ENCODE measurements at regions of chr19 and their contacts with region 1.

Region 1: GRCh38 chr19:1507763-1508509 is 4.9 kb downstream of the ADAMTSL5 start:
- DNase-seq: peak; percentile 72
- ATAC-seq: peak; percentile 89
- H3K4me3 Mint-ChIP-seq: peak overlapping the region; percentile 80
- H3K27ac Mint-ChIP-seq: peak overlapping the region; percentile 80
- H3K4me1 Mint-ChIP-seq: peaks cover 14% of the 10 kb centered on the region
- H3K27me3 Mint-ChIP-seq: peaks cover 39% of the 10 kb centered on the region
- CTCF ChIP-seq: no peak

Region 2: DNA sequence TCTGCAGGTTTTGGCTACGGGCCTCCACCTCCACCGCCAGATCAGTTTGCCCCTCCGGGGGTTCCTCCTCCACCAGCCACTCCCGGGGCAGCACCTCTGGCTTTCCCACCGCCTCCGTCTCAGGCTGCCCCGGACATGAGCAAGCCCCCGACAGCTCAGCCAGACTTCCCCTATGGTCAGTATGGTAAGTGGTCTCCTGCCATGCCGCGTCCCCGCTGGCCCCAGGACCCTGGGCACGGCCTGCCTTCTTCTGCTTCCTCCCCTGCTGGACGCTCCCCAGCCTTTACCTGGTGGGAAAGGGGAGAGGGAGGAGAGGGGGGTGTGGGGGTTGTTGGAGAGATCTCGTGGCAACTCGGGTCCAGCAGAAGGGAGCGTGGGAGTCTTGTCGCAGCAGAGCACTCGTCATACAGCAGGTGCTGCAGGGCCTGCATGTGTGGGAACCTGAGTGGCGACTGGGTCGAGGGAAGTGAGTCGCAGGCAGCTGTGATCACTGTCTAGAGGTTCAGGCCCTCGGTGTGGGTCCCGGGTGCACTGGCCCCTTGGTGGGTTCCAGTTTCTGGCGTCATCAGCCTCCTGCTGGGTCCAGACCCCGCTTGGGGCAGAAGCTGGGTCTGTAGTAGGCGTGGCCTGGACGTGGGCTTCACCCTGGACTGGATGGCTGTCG is 75.3 kb before region 1 on chr19:
- CTCF ChIA-PET with region 1: no interaction called
- POLR2A ChIA-PET with region 1: no interaction called
- intact Hi-C with region 1: no loop called
- DNase-seq: no peak
- ATAC-seq: no peak
- H3K4me3 Mint-ChIP-seq: no peak overlapping the region
- H3K27ac Mint-ChIP-seq: no peak overlapping the region
- H3K4me1 Mint-ChIP-seq: peaks cover 1% of the 10 kb centered on the region
- H3K27me3 Mint-ChIP-seq: no peaks in the 10 kb centered on the region
- CTCF ChIP-seq: no peak

Region 3: GRCh38 chr19:1455336-1456120 is 52.4 kb before region 1 on chr19:
- CTCF ChIA-PET with region 1: no interaction called
- POLR2A ChIA-PET with region 1: no interaction called
- intact Hi-C with region 1: no loop called
- DNase-seq: no peak
- ATAC-seq: peak; percentile 73
- H3K4me3 Mint-ChIP-seq: peak overlapping the region; percentile 46
- H3K27ac Mint-ChIP-seq: no peak overlapping the region
- H3K4me1 Mint-ChIP-seq: peaks cover 23% of the 10 kb centered on the region
- H3K27me3 Mint-ChIP-seq: peaks cover 35% of the 10 kb centered on the region
- CTCF ChIP-seq: no peak

Region 4: GRCh38 chr19:1478934-1479707 is 28.8 kb before region 1 on chr19 and contains the start of gene C19orf25:
- CTCF ChIA-PET with region 1: no interaction called
- POLR2A ChIA-PET with region 1: no interaction called
- intact Hi-C with region 1: loop called (anchors 1 kb)
- DNase-seq: peak; percentile 89
- ATAC-seq: peak; percentile 93
- H3K4me3 Mint-ChIP-seq: peak within 1 kb of the TSS; percentile 98
- H3K27ac Mint-ChIP-seq: peak within 1 kb of the TSS; percentile 95
- H3K4me1 Mint-ChIP-seq: peaks cover 18% of the 10 kb centered on the region
- H3K27me3 Mint-ChIP-seq: no peaks in the 10 kb centered on the region
- CTCF ChIP-seq: no peak
- total RNA-seq, gene C19orf25: 42.8 and 55.7 TPM in 2 replicates

Region 5: DNA sequence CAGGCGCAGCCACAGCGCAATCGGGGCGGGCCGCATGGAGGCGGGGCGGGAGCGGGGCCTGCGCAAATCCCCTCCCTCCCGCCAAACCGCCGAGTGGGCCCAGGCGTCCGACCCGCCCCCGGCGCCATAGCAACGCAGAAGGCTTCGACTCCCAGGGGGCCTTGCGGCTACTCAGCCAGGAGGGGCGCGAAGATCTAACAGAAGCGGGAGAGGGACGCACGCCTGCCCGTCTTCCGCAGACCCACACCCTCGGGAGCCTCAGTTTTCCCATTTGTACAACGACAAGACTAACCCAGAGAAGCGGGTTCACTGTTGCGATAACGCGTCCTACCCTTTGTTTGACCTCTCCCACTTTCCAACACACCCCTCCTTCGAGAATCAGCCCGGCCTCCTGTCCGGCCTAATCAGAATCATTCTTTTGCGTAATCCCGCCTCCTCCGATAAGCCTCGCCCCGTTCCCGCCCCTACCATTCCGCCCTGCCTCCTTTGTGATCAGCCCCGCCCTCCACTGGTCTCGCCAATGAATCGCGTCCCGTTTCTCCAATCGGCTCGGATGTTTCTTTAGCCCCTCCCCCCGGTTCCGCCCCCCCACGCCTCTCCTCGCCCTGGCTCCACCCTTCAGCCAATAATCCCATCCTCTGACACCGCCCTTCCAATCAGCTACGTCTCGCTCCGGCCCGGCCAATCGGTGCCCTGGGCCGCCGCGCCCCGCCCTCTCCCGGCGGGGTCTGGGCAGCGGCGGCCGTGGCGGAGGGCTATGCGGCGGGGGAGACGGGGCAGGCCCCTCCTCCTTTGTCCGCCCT is 17.4 kb before region 1 on chr19 and contains the start of gene PCSK4:
- CTCF ChIA-PET with region 1: no interaction called
- POLR2A ChIA-PET with region 1: no interaction called
- intact Hi-C with region 1: loop called (anchors 1 kb)
- DNase-seq: peak; percentile 94
- ATAC-seq: peak; percentile 83
- H3K4me3 Mint-ChIP-seq: peak within 1 kb of the TSS; percentile 89
- H3K27ac Mint-ChIP-seq: peak within 1 kb of the TSS; percentile 88
- H3K4me1 Mint-ChIP-seq: peaks cover 12% of the 10 kb centered on the region
- H3K27me3 Mint-ChIP-seq: peaks cover 5% of the 10 kb centered on the region
- CTCF ChIP-seq: no peak
- total RNA-seq, gene PCSK4: 1.2 and 1.3 TPM in 2 replicates

Region 6: GRCh38 chr19:1587873-1588272 is 79.9 kb after region 1 on chr19:
- CTCF ChIA-PET with region 1: no interaction called
- POLR2A ChIA-PET with region 1: interaction called, 12 read pairs
- intact Hi-C with region 1: no loop called
- DNase-seq: no peak
- ATAC-seq: no peak
- H3K4me3 Mint-ChIP-seq: no peak overlapping the region
- H3K27ac Mint-ChIP-seq: no peak overlapping the region
- H3K4me1 Mint-ChIP-seq: peaks cover 24% of the 10 kb centered on the region
- H3K27me3 Mint-ChIP-seq: no peaks in the 10 kb centered on the region
- CTCF ChIP-seq: no peak

Region 7: DNA sequence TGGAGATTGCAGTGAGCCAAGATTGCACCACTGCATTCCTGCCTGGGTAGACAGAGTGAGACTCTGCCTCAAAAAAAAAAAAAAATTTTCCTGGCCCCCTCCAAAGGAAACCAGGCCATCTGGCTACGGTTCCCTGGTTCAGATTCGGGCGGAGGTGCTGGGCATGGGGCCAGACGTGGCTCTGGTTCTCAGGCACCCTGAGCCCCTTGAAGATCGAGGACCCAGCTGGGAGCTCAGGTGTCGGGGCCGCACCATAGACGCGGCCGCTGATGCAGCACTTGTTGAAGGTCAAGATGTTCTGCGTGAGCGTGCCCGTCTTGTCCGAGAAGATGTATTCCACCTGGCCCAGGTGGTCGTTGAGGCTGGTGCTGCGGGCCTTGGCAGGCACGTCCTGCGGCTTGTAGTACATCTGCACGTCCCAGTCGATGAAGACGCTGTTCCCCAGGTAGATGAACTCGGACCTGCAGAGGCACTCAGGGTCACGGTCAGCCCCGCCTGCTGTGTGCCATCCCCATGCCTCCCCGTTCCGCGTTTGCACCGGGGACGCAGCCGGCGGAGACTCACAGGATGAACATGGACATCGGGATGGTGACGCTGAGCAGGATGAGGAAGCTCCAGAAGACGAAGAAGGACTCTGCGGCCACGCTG is 291.9 kb after region 1 on chr19:
- CTCF ChIA-PET with region 1: no interaction called
- POLR2A ChIA-PET with region 1: interaction called, 11 read pairs
- intact Hi-C with region 1: no loop called
- DNase-seq: no peak
- ATAC-seq: no peak
- H3K4me3 Mint-ChIP-seq: no peak overlapping the region
- H3K27ac Mint-ChIP-seq: no peak overlapping the region
- H3K4me1 Mint-ChIP-seq: no peaks in the 10 kb centered on the region
- H3K27me3 Mint-ChIP-seq: peaks cover 1% of the 10 kb centered on the region
- CTCF ChIP-seq: no peak

Measured in activated B cell treated with CpG ODN at 0.5 μM for 24 hours (primary cell).